ENCODE measurements at regions of chr21 and their contacts with region 1.

Region 1: DNA sequence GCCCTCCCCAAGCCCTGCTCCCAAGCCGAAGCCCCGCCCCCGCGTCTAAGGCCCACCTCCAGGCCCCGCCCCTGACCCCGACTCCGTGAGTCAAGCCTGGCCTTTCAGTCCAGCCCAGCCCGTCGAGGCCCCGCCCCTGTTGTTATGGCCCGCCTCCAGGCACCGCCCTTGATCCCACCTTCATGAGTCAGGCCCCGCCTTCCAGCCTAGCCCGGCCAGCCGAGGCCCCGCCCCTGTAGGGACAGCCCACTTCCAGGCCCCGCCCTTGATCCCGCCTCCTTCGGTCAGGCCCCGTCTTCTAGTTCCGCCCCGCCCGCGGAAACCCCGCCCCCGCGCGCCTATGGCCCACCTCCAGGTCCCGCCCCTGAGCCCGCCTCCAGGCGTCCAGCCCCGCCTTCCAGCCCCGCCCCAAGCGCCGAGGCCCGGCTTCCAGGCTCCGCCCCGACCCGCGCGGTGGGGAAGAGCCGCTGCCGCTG is 247 bp upstream of the DOP1B start:
- DNase-seq: peak; percentile 91
- H3K4me3 ChIP-seq: peak overlapping the region; percentile 85
- CTCF ChIP-seq: no peak

Region 2: DNA sequence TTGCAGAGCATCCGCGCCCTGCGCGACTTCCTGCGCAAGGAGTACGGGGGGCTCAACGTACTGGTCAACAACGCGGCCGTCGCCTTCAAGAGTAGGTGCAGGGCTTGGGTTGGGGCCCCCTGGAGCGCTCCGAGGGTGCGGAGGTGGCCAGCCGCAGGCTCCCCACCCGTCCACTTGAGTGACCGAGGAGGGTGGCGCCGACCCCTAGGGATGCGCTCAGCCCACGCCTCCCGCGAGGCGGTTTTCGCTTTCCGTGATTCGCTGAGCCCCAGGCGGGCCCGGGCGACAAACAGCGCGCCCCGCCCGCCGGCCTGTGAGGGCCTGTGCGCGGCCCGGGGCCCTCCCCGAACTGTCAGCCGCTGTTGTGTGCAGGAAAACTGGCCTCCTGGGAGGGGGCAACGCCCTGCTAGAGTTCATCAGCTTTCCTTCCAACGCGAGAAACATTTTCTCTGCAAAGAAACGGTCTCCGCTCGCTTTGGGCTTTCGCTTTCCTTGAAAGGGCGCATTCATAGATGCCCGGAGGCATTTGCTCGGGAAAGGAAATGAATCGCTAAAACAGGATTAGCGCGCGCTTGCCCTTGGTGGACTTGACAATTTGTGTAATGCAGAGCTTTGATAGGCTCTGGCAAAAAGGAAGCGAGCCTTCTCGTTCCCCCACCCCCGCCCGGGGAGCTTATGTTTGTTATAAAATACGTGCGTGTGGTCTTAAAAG is 20.8 kb before region 1 on chr21:
- CTCF ChIA-PET with region 1: interaction called, 71 read pairs
- POLR2A ChIA-PET with region 1: interaction called, 3 read pairs
- DNase-seq: no peak
- H3K4me3 ChIP-seq: peak overlapping the region; percentile 76
- CTCF ChIP-seq: no peak

Region 3: DNA sequence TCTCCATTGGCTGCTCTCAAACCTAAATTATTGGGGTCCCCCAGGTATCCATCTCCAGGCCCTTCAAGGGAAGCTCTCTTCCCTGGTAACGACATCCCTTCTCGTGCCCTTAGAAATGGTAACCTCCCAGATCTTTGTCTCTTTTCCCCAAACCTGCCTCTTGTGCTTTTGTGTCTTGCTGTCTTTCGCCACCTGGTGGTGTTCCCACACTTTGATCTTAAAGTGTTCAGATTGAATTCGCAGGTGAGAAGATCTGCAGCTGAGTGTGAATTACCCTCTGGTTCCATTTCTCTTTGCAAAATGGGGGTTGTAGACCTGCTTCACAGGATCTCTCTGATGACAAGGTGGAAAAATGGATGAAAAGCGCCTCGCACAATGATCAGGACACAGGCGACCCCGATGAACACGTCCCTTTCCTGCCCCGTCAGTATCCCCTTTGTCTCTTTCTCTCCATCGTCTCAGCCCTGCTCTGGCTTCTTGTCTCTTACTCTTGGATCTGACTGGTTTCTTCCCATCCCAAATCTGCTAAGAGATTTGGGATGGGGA is 53.3 kb after region 1 on chr21:
- CTCF ChIA-PET with region 1: interaction called, 43 read pairs
- POLR2A ChIA-PET with region 1: interaction called, 4 read pairs
- DNase-seq: no peak
- H3K4me3 ChIP-seq: no peak overlapping the region
- CTCF ChIP-seq: peak; percentile 48